ENCODE measurements at regions of chr10 and their contacts with region 1.

Region 1: GRCh38 chr10:22325272-22326144 is 4.6 kb downstream of the BMI1 start:
- DNase-seq: peak; percentile 57 to 93
- H3K4me3 ChIP-seq: peak overlapping the region; percentile 40
- CTCF ChIP-seq: no peak
- POLR2A ChIP-seq: no peak

Region 2: GRCh38 chr10:21292763-21293517 is 1032.6 kb before region 1 on chr10:
- intact Hi-C with region 1: loop called (anchors 10 kb)
- DNase-seq: peak; percentile 81 to 90
- H3K4me3 ChIP-seq: no peak overlapping the region
- CTCF ChIP-seq: no peak
- POLR2A ChIP-seq: no peak

Region 3: DNA sequence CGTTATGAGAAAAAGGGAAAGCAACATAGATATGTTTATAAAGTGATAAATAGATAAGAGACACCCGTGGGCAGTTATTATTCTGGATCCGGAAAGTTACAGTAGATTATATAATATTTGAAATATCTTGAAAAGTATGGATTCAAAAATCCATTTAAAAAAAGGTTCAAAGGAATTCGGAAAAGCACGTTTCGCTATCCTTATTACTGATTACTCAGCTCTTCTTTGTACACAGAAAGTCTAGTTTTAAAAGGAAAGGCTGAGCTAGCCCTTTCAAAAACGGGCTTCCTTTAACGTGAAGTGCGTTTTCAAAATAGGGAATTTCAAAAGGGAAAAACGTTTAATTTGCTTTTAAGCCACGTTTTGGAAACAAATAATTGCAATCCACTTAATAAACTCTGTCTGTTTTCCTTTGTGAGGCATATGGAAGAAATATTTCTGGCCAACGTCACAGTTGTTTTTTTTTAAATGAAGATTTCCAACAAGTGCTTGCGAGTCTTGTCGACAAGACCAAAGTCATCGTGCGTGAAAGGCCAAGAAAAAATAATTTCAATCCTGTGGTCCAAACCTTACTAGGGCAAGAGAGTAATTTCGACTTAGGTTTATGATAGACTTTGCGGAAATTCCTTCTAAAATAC is 797.8 kb before region 1 on chr10:
- intact Hi-C with region 1: loop called (anchors 2 kb)
- DNase-seq: no peak
- H3K4me3 ChIP-seq: peak overlapping the region; percentile 58
- CTCF ChIP-seq: no peak
- POLR2A ChIP-seq: no peak

Region 4: GRCh38 chr10:22251751-22252223 is 73.7 kb before region 1 on chr10:
- intact Hi-C with region 1: loop called (anchors 5 kb)
- DNase-seq: peak; percentile 38 to 90
- H3K4me3 ChIP-seq: peak overlapping the region; percentile 82
- CTCF ChIP-seq: no peak
- POLR2A ChIP-seq: no peak

Region 5: DNA sequence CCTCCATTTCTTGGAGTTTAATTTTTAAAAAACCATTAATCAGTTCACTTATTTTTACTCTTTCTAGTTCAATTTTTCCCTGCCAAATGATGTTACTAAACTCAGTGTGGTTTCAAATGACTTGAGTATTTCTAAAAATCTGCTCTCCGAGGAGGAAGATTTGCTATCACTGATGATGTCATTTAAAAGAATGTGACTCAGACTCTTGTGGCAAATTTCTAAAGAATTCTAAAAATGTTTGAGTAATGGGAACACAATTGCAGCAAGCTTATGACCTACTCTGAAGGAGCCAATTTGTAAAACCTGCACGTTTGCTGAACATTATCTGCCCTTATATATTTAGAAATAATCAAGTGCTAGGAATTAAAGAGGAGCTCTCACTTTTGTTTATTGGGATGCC is 108.4 kb after region 1 on chr10:
- intact Hi-C with region 1: loop called (anchors 5 kb)
- DNase-seq: no peak
- H3K4me3 ChIP-seq: no peak overlapping the region
- CTCF ChIP-seq: no peak
- POLR2A ChIP-seq: no peak

Region 6: GRCh38 chr10:22544325-22545068 is 219.0 kb after region 1 on chr10:
- intact Hi-C with region 1: no loop called
- DNase-seq: no peak
- H3K4me3 ChIP-seq: no peak overlapping the region
- CTCF ChIP-seq: no peak
- POLR2A ChIP-seq: no peak

Measured in lower leg skin (tissue), 4 donors.